Esophagus squamous epithelium (tissue), 5 donors: ENCODE measurements at regions of chr3 and their contacts with region 1.

Region 1: GRCh38 chr3:50530001-50530970 is 26.9 kb upstream of the CACNA2D2 start:
- DNase-seq: no peak
- H3K4me3 ChIP-seq: peak overlapping the region in 2 of 4 donors; percentile 19 to 34
- H3K27ac ChIP-seq: no peak overlapping the region
- H3K4me1 ChIP-seq: peaks cover 0 to 11% (median 0%) of the 10 kb centered on the region in 3 donors
- H3K27me3 ChIP-seq: peaks cover 0 to 27% (median 0%) of the 10 kb centered on the region in 4 donors
- CTCF ChIP-seq: no peak
- POLR2A ChIP-seq: no peak

Region 2: GRCh38 chr3:50192689-50193141 is 337.6 kb before region 1 on chr3:
- intact Hi-C with region 1: no loop called
- DNase-seq: no peak
- H3K4me3 ChIP-seq: no peak overlapping the region
- H3K27ac ChIP-seq: no peak overlapping the region
- H3K4me1 ChIP-seq: peaks cover 17 to 57% (median 22%) of the 10 kb centered on the region in 3 donors
- H3K27me3 ChIP-seq: peaks cover 0 to 53% (median 11%) of the 10 kb centered on the region in 4 donors
- CTCF ChIP-seq: peak; percentile 88 to 95 (median 91)
- POLR2A ChIP-seq: no peak

Region 3: DNA sequence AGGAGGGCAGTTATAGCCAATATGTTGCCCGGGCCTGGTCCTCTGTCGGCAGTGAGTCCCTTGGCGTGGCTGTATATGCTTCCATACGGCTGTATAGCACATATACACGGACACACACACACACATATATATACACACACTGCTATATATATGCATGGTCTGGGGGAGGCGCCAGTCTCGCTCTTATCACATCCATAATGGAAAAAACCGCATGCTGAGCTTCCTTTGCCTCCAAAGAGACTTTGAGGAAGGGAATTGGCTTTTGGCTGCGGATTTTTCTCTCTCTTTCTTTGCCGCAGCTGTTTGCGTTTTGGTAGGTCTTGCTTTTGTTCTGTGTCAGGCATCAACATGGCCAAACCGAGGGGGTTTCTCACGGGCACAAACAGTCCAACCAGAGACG is 159.7 kb before region 1 on chr3:
- intact Hi-C with region 1: loop called (anchors 10 kb)
- DNase-seq: no peak
- H3K4me3 ChIP-seq: no peak overlapping the region
- H3K27ac ChIP-seq: no peak overlapping the region
- H3K4me1 ChIP-seq: peaks cover 0 to 8% (median 2%) of the 10 kb centered on the region in 3 donors
- H3K27me3 ChIP-seq: peaks cover 0 to 13% (median 0%) of the 10 kb centered on the region in 4 donors
- CTCF ChIP-seq: peak in 1 of 6 experiments; percentile 21
- POLR2A ChIP-seq: no peak

Region 4: DNA sequence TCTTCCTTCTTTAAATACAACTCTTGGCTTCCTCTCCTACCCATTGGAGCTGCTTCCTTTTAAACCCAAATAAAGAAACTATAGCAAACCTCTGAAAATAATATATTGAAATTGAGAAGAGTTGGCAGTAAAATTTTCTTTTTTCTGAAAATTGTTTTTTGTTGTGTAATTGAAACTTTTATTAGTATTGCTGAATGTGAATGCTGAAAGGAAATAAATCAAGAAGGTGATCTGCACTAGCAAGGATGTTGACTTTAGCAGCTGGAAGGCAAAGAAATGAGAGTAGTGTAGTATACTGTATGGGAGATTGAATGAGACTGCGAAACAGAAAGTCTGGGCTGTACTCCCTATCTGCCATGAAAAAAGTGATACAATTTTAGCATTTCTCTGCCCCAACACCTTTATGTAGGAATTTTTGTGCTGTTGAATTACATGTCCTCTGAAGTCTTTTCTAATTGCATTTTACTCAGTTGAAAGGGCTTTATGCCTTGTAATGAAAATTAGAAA is 310.8 kb after region 1 on chr3:
- intact Hi-C with region 1: no loop called
- DNase-seq: no peak
- H3K4me3 ChIP-seq: no peak overlapping the region
- H3K27ac ChIP-seq: no peak overlapping the region
- H3K4me1 ChIP-seq: no peaks in the 10 kb centered on the region
- H3K27me3 ChIP-seq: no peaks in the 10 kb centered on the region
- CTCF ChIP-seq: no peak
- POLR2A ChIP-seq: no peak